ENCODE measurements at regions of chr1 and their contacts with region 1.

Region 1: DNA sequence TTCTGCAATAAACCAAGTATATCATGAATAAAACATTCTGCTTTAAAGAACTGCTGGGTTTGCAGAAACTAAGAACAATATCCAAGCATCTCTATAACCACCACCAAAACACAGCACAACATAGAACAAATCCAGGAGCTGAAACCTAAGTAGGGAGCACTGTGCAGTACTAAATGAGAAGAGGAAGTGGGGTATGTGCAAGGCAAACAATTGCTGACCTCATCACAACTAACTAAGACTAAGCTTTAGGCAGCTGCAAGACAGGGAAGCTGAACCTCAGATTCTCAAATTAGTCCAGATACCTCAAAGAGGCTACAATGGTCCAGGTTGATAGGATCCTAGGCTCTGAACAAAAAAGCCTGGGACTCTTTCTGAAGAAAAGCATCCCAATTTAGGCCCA is 172.6 kb downstream of the SLC44A5 start:
- DNase-seq: no peak
- ATAC-seq: peak; percentile 67
- H3K4me3 ChIP-seq: no peak overlapping the region
- H3K27ac ChIP-seq: no peak overlapping the region
- H3K4me1 ChIP-seq: peaks cover 0 to 6% of the 10 kb centered on the region in 2 experiments; a peak in 2 of 5 replicates
- H3K27me3 ChIP-seq: no peaks in the 10 kb centered on the region
- CTCF ChIP-seq: no peak
- EP300 ChIP-seq: no peak
- POLR2A ChIP-seq: no peak
- RAD21 ChIP-seq: no peak

Region 2: GRCh38 chr1:74733604-74734484 is 704.5 kb before region 1 on chr1:
- CTCF ChIA-PET with region 1: no interaction called
- POLR2A ChIA-PET with region 1: no interaction called
- in situ Hi-C with region 1: no loop called
- intact Hi-C with region 1: no loop called
- DNase-seq: peak; percentile 52 to 83 (median 56)
- ATAC-seq: peak; percentile 78
- H3K4me3 ChIP-seq: peak overlapping the region; percentile 59
- H3K27ac ChIP-seq: peak overlapping the region; percentile 92
- H3K4me1 ChIP-seq: peaks cover 5 to 19% of the 10 kb centered on the region in 2 experiments; a peak in 3 of 5 replicates
- H3K27me3 ChIP-seq: no peaks in the 10 kb centered on the region
- CTCF ChIP-seq: peak; percentile 77 to 94 (median 90)
- EP300 ChIP-seq: no peak
- POLR2A ChIP-seq: no peak
- RAD21 ChIP-seq: peak; percentile 64 to 65

Region 3: GRCh38 chr1:75449998-75450397 is 11.6 kb after region 1 on chr1:
- CTCF ChIA-PET with region 1: no interaction called
- POLR2A ChIA-PET with region 1: interaction called, 11 read pairs
- in situ Hi-C with region 1: no loop called
- intact Hi-C with region 1: no loop called
- DNase-seq: peak in 1 of 4 experiments; percentile 36
- ATAC-seq: peak; percentile 72
- H3K4me3 ChIP-seq: no peak overlapping the region
- H3K27ac ChIP-seq: no peak overlapping the region
- H3K4me1 ChIP-seq: peaks cover 0 to 4% of the 10 kb centered on the region in 2 experiments; a peak in 2 of 5 replicates
- H3K27me3 ChIP-seq: no peaks in the 10 kb centered on the region
- CTCF ChIP-seq: no peak
- EP300 ChIP-seq: no peak
- POLR2A ChIP-seq: no peak
- RAD21 ChIP-seq: no peak

Measured in K562 (cell line).